Activated B cell treated with CpG ODN at 0.5 μM for 24 hours (primary cell): ENCODE measurements at regions of chr19 and their contacts with region 1.

Region 1: DNA sequence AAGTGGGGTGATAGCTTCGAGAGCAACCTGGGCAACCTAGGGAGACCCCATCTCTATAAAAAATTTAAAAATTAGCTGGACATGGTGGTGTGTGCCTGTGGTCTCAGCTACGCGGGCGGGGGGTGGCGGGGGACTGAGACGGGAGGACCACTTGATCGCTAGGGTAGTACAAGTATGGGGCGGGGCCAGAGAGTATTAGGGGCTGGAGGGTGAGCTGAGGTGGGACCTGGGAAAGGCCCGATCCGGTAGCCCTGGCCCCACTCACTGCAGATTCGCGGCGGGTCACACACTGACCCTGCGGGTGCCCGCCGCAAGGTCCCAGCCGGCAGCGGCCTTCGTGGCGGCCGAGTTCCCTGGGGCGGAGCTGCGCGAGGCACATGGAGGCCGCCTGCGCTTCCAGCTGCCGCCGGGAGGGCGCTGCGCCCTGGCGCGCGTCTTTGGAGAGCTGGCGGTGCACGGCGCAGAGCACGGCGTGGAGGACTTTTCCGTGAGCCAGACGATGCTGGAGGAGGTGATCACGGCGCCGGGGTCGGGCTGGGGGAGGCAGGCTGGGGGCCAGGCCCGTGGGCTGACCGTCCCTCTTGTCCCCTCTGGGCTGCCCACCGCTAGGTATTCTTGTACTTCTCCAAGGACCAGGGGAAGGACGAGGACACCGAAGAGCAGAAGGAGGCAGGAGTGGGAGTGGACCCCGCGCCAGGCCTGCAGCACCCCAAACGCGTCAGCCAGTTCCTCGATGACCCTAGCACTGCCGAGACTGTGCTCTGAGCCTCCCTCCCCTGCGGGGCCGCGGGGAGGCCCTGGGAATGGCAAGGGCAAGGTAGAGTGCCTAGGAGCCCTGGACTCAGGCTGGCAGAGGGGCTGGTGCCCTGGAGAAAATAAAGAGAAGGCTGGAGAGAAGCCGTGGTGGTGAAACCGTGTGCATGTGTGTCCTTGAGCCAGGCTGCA is 2.0 kb upstream of the ARHGAP45 start:
- DNase-seq: peak; percentile 68
- ATAC-seq: peak; percentile 36
- H3K4me3 Mint-ChIP-seq: peak overlapping the region; percentile 60
- H3K27ac Mint-ChIP-seq: no peak overlapping the region
- H3K4me1 Mint-ChIP-seq: peaks cover 38% of the 10 kb centered on the region
- H3K27me3 Mint-ChIP-seq: no peaks in the 10 kb centered on the region
- CTCF ChIP-seq: peak; percentile 33

Region 2: GRCh38 chr19:1020868-1021425 is 44.0 kb before region 1 on chr19 and contains the start of gene TMEM259:
- CTCF ChIA-PET with region 1: interaction called, 13 read pairs
- POLR2A ChIA-PET with region 1: interaction called, 56 read pairs
- intact Hi-C with region 1: loop called (anchors 1 kb)
- DNase-seq: peak; percentile 95
- ATAC-seq: peak; percentile 87
- H3K4me3 Mint-ChIP-seq: peak within 1 kb of the TSS; percentile 87
- H3K27ac Mint-ChIP-seq: peak within 1 kb of the TSS; percentile 99
- H3K4me1 Mint-ChIP-seq: peaks cover 53% of the 10 kb centered on the region
- H3K27me3 Mint-ChIP-seq: no peaks in the 10 kb centered on the region
- CTCF ChIP-seq: no peak
- total RNA-seq, gene TMEM259: 223 and 257 TPM in 2 replicates

Region 3: GRCh38 chr19:1039646-1040475 is 25.1 kb before region 1 on chr19 and contains the start of gene ABCA7:
- CTCF ChIA-PET with region 1: interaction called, 5 read pairs
- POLR2A ChIA-PET with region 1: interaction called, 140 read pairs
- intact Hi-C with region 1: loop called (anchors 2 kb)
- DNase-seq: peak; percentile 99
- ATAC-seq: peak; percentile 78
- H3K4me3 Mint-ChIP-seq: peak within 1 kb of the TSS; percentile 98
- H3K27ac Mint-ChIP-seq: peak within 1 kb of the TSS; percentile 96
- H3K4me1 Mint-ChIP-seq: peaks cover 61% of the 10 kb centered on the region
- H3K27me3 Mint-ChIP-seq: no peaks in the 10 kb centered on the region
- CTCF ChIP-seq: no peak
- total RNA-seq, gene ABCA7: 164 and 188 TPM in 2 replicates

Region 4: DNA sequence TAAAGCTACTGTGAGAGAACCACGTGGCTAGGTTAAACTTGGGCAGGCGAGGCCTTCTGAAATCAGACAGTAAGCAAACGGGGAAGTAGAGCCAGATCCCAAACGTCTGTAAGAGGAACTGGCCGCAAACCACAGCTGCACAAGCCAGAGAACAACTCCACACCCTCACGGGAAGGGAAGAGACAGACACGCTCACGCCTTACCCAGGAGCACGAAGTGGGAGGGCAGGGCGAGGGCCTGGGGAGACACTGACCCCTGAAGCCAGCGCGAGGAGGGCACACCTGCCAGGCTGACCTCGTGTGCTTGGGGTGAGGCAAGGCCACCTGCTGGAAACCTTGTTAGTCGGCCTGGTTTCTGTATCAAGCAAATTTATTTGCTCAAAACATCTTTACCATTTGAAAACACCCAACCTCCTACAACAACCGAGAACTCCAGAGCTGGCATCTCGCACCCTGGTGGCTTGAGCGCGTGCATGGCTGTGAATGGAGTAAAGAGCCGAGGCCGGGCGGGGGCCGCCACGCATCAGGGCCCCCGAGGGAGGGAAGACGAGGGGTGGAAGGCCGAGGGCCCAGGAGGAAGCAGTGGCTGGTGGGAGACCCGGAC is 23.0 kb after region 1 on chr19:
- CTCF ChIA-PET with region 1: interaction called, 7 read pairs
- POLR2A ChIA-PET with region 1: interaction called, 184 read pairs
- intact Hi-C with region 1: loop called (anchors 2 kb)
- DNase-seq: peak; percentile 45
- ATAC-seq: peak; percentile 64
- H3K4me3 Mint-ChIP-seq: peak overlapping the region; percentile 66
- H3K27ac Mint-ChIP-seq: peak overlapping the region; percentile 92
- H3K4me1 Mint-ChIP-seq: peaks cover 46% of the 10 kb centered on the region
- H3K27me3 Mint-ChIP-seq: no peaks in the 10 kb centered on the region
- CTCF ChIP-seq: no peak

Region 5: GRCh38 chr19:1131738-1132551 is 67.0 kb after region 1 on chr19:
- CTCF ChIA-PET with region 1: interaction called, 5 read pairs
- POLR2A ChIA-PET with region 1: interaction called, 10 read pairs
- intact Hi-C with region 1: no loop called
- DNase-seq: peak; percentile 76
- ATAC-seq: peak; percentile 65
- H3K4me3 Mint-ChIP-seq: peak overlapping the region; percentile 86
- H3K27ac Mint-ChIP-seq: peak overlapping the region; percentile 77
- H3K4me1 Mint-ChIP-seq: peaks cover 47% of the 10 kb centered on the region
- H3K27me3 Mint-ChIP-seq: no peaks in the 10 kb centered on the region
- CTCF ChIP-seq: no peak

Region 6: DNA sequence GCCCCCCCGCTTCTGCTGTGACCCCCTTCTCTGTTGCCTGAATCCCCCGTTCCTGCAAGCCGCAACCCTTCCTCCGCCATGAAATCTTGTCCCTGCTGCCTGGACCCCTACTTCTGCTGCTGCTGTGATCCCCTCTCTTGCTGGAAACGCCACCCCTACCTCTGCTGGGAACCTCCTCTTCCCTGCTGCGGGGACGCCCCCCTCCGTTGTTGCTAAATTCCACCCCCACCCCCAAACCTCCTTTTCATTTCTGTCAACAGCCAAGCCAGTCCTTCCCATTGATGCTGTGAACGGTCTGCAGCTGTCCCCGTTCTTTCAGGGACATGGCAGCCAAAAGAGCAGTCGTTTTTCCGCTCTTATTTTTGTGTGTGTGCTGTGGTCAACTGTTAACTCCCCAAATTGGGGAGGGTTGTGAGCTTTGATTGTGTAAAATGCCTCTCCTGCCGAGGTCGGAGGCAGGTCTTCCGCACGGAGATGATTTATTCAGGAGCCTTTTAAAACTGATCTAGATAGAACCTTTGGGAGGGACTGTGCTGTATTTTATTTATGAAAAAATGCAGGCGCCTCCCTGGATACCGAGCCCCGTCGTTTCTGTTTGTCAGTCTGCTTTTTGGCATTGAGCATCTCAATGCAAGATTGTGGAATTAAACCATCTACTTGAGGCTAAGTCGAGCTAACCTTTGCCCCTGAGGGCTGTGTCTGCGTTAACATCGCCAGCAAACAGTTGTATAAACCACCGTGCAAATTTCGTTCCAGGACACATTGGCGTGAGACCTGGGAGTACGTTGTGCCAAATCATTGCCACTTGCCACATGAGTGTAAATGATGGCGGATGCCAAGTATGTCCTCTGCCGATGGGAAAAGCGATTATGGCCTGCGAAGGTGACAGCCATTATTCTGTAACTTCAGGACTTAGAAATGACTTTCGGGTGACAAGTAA is 290.9 kb after region 1 on chr19:
- CTCF ChIA-PET with region 1: no interaction called
- POLR2A ChIA-PET with region 1: no interaction called
- intact Hi-C with region 1: no loop called
- DNase-seq: no peak
- ATAC-seq: no peak
- H3K4me3 Mint-ChIP-seq: peak overlapping the region; percentile 86
- H3K27ac Mint-ChIP-seq: peak overlapping the region; percentile 70
- H3K4me1 Mint-ChIP-seq: peaks cover 13% of the 10 kb centered on the region
- H3K27me3 Mint-ChIP-seq: no peaks in the 10 kb centered on the region
- CTCF ChIP-seq: no peak